ENCODE measurements at regions of chr7 and their contacts with region 1.

Region 1: GRCh38 chr7:8295638-8296361 is 33.8 kb upstream of the ICA1 start:
- DNase-seq: peak; percentile 78
- H3K4me3 ChIP-seq: no peak overlapping the region
- H3K27ac ChIP-seq: no peak overlapping the region
- H3K4me1 ChIP-seq: no peaks in the 10 kb centered on the region
- H3K27me3 ChIP-seq: peaks cover 3 to 8% of the 10 kb centered on the region in 2 experiments
- CTCF ChIP-seq: peak; percentile 56 to 64
- POLR2A ChIP-seq: no peak

Region 2: GRCh38 chr7:7103343-7104313 is 1192.2 kb before region 1 on chr7:
- CTCF ChIA-PET with region 1: interaction called, 17 read pairs
- POLR2A ChIA-PET with region 1: no interaction called
- dilution Hi-C with region 1: no loop called
- intact Hi-C with region 1: loop called (anchors 5 kb)
- DNase-seq: peak; percentile 70
- H3K4me3 ChIP-seq: peak overlapping the region in 1 of 3 experiments; percentile 8
- H3K27ac ChIP-seq: no peak overlapping the region
- H3K4me1 ChIP-seq: peaks cover 15% of the 10 kb centered on the region
- H3K27me3 ChIP-seq: no peaks in the 10 kb centered on the region
- CTCF ChIP-seq: peak; percentile 45 to 49
- POLR2A ChIP-seq: no peak

Region 3: GRCh38 chr7:7595451-7595850 is 700.3 kb before region 1 on chr7:
- CTCF ChIA-PET with region 1: interaction called, 49 read pairs
- POLR2A ChIA-PET with region 1: no interaction called
- dilution Hi-C with region 1: no loop called
- intact Hi-C with region 1: loop called (anchors 1 kb)
- DNase-seq: peak; percentile 41
- H3K4me3 ChIP-seq: no peak overlapping the region
- H3K27ac ChIP-seq: no peak overlapping the region
- H3K4me1 ChIP-seq: no peaks in the 10 kb centered on the region
- H3K27me3 ChIP-seq: no peaks in the 10 kb centered on the region
- CTCF ChIP-seq: no peak
- POLR2A ChIP-seq: no peak

Region 4: GRCh38 chr7:7761340-7761980 is 534.3 kb before region 1 on chr7:
- CTCF ChIA-PET with region 1: interaction called, 8 read pairs
- POLR2A ChIA-PET with region 1: no interaction called
- dilution Hi-C with region 1: no loop called
- intact Hi-C with region 1: loop called (anchors 2 kb)
- DNase-seq: peak; percentile 58
- H3K4me3 ChIP-seq: peak overlapping the region; percentile 5 to 58 (median 40)
- H3K27ac ChIP-seq: no peak overlapping the region
- H3K4me1 ChIP-seq: peaks cover 11% of the 10 kb centered on the region
- H3K27me3 ChIP-seq: no peaks in the 10 kb centered on the region
- CTCF ChIP-seq: peak in 1 of 2 donors; percentile 19
- POLR2A ChIP-seq: no peak

Region 5: GRCh38 chr7:8190119-8190895 is 105.5 kb before region 1 on chr7:
- CTCF ChIA-PET with region 1: interaction called, 18 read pairs
- POLR2A ChIA-PET with region 1: no interaction called
- dilution Hi-C with region 1: no loop called
- intact Hi-C with region 1: loop called (anchors 1 kb)
- DNase-seq: peak; percentile 65
- H3K4me3 ChIP-seq: no peak overlapping the region
- H3K27ac ChIP-seq: no peak overlapping the region
- H3K4me1 ChIP-seq: no peaks in the 10 kb centered on the region
- H3K27me3 ChIP-seq: no peaks in the 10 kb centered on the region
- CTCF ChIP-seq: peak; percentile 34 to 57
- POLR2A ChIP-seq: no peak

Region 6: DNA sequence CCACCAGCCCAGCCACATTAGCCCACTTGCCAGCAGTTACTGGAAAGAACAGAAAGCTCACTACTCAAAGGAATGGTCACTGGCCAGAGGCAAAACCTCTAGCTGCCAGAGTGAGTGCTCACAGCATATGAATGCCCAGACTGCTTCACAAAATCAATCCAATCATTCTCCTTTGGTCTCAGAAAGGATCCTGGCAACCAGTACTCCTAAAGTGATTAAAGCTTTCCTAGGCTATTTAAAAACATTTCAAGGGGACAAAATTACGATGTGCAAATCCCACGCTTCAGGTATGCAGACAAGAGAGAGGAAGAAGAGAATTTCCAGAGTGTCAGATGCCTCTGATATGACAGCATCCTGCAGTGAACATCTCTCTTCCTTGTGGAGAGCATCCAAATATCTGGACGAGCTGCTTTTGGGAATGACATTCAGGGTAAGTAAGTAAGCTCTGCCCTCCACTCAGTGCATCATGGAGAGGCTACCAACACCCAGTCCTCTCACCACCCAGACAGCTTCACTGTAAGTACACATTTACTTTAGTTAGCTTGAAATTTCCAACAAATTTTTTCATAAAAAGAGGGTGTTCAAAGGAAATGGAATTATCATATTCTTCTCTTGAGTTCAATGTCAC is 58.9 kb before region 1 on chr7:
- CTCF ChIA-PET with region 1: interaction called, 10 read pairs
- POLR2A ChIA-PET with region 1: no interaction called
- dilution Hi-C with region 1: no loop called
- intact Hi-C with region 1: no loop called
- DNase-seq: no peak
- H3K4me3 ChIP-seq: no peak overlapping the region
- H3K27ac ChIP-seq: no peak overlapping the region
- H3K4me1 ChIP-seq: no peaks in the 10 kb centered on the region
- H3K27me3 ChIP-seq: no peaks in the 10 kb centered on the region
- CTCF ChIP-seq: no peak
- POLR2A ChIP-seq: no peak

Region 7: DNA sequence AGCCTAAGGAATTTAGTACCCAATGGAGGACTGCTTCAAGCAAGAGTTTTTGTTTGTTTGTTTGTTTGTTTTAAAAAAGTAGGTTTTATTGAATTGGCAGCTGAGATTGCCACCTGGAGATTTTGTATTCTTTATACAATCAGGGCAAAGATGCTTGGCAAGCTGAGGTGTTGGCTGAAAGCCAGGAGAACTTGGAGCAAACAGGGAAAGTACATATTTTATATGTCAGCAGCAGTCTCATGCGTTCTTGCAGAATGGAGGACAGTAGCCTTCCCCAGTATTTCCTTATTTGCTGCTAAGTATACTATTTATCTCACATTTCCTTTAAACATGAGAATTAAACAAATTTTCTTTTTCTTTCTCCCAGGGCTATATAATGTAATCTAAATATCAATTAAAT is 11.2 kb before region 1 on chr7:
- CTCF ChIA-PET with region 1: interaction called, 14 read pairs
- POLR2A ChIA-PET with region 1: no interaction called
- dilution Hi-C with region 1: no loop called
- intact Hi-C with region 1: no loop called
- DNase-seq: peak; percentile 8
- H3K4me3 ChIP-seq: no peak overlapping the region
- H3K27ac ChIP-seq: no peak overlapping the region
- H3K4me1 ChIP-seq: no peaks in the 10 kb centered on the region
- H3K27me3 ChIP-seq: peaks cover 0 to 2% of the 10 kb centered on the region in 2 experiments
- CTCF ChIP-seq: no peak
- POLR2A ChIP-seq: no peak

Measured in endothelial cell of umbilical vein (primary cell).